Ascending aorta (tissue), 2 donors: ENCODE measurements at regions of chr22 and their contacts with region 1.

Region 1: DNA sequence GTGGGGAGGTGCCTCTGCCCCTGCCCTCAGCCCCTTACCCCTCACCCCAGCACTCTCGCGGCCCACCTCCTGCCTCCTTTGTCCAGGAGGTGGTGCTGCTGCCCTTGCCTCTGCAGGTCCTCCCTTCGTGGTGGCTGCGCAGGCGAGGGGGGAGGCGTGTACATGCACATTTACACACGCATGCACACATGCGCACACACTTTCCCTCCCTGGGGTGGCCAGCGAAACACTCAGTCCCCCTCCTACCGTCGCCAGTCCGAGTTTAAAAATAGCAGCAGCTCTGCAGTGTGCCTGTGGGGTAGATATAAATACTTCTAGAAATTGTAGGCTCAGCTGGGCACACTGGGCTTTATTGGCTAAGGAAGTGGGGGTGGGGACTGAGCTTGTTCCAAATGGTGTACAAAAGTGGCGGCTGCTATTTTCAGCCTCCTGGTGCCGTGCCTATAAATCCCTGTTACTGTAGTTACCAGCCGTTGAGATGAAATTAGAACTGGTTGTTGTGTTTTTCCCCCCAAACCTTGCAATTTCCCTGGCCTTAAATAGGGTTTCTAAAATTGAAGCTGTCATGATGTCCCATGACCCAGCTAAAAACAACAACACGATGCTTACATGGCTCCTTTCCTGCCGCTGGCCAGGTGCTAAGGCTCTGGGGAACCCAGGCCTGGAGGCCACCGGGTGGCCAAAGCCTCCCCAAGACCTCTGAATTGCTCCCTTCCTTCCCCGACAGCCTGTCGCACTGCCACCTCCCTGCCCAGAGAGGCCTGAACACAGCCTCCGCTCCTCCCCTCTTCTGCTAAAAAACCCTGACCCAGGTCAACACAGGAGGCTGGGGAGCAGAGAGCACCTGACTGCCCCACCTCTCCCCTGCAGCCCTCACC is 12.4 kb downstream of the PICK1 start:
- DNase-seq: peak; percentile 82 to 97
- H3K4me3 ChIP-seq: peak overlapping the region in 1 of 2 donors; percentile 40
- H3K27ac ChIP-seq: peak overlapping the region; percentile 94 to 97
- H3K4me1 ChIP-seq: peaks cover 32 to 48% of the 10 kb centered on the region in 2 donors
- H3K27me3 ChIP-seq: no peaks in the 10 kb centered on the region
- CTCF ChIP-seq: peak; percentile 81 to 88 (median 84)

Region 2: DNA sequence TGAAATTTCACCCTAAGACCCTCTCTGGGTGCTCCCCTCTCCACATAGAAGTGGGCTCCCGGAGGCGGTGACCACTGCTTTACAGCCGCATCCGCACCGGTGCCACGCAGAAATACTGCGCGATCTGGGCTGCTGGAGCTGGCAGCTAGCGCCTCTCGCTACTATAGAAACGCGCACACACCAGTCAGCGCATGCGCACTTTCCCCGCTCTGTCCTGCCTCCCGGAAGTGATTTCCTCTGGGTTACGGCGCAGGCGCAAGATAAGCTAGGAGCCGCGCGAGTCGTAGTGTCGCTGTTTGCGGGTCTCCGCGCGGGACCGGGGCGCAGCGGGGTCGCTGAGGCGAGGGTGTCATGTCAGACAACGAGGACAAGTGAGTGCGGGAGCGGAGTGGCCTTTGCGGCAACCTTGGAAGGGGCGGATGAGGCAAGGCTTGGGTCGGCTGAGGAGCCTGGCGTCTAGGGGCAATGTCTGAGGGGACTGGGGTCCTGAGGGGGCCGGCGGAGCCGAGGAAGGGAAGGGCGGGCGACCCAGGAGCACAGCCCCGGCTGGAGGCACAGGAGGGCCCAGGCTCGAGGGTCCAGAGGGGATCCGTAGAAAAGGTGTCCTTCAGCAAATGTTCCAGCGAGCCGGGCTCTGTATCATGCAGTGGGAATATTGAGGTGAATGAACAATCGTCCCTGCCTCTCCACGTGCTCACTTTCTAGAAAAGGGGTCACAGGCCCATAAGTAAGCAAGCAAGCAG is 116.0 kb before region 1 on chr22 and contains the starts of genes C22orf23 and POLR2F:
- intact Hi-C with region 1: no loop called
- DNase-seq: peak; percentile 64 to 97
- H3K4me3 ChIP-seq: peak within 1 kb of the TSS; percentile 73 to 95
- H3K27ac ChIP-seq: peak within 1 kb of the TSS; percentile 54 to 63
- H3K4me1 ChIP-seq: peaks cover 2 to 15% of the 10 kb centered on the region in 2 donors
- H3K27me3 ChIP-seq: no peaks in the 10 kb centered on the region
- CTCF ChIP-seq: no peak
- total RNA-seq, gene C22orf23: not detected
- total RNA-seq, gene POLR2F: 204 TPM

Region 3: DNA sequence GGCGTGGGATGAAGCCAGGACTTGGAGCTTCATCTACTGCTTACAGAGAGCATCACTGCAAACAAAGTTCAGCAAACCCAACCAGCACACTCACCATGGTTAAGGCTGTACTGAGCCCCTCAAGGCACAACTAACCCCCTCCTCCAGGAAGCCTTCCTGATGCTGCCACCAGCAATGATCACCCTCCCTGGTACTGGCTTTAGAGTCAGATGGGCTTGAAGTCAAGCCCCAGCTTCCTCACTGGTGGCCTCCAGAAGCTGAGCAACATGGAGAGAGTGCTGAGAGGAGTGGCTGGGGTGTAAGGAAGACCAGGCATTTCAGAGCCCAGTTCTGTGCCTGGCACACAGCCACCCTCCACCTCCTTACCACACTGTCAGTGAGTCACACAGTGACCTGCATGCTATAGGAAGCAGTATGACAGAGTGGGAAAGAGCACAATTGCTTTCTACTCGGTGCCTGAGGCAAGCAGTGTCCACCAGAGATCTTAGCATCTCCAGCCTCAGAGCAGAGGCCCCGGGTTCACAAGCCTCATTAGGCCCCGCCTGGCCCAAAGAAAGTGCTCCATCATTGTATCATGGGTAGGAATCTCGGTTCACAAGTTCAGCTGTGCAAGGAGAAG is 65.6 kb after region 1 on chr22:
- intact Hi-C with region 1: no loop called
- DNase-seq: no peak
- H3K4me3 ChIP-seq: no peak overlapping the region
- H3K27ac ChIP-seq: no peak overlapping the region
- H3K4me1 ChIP-seq: peaks cover 2 to 10% of the 10 kb centered on the region in 2 donors
- H3K27me3 ChIP-seq: no peaks in the 10 kb centered on the region
- CTCF ChIP-seq: no peak

Region 4: DNA sequence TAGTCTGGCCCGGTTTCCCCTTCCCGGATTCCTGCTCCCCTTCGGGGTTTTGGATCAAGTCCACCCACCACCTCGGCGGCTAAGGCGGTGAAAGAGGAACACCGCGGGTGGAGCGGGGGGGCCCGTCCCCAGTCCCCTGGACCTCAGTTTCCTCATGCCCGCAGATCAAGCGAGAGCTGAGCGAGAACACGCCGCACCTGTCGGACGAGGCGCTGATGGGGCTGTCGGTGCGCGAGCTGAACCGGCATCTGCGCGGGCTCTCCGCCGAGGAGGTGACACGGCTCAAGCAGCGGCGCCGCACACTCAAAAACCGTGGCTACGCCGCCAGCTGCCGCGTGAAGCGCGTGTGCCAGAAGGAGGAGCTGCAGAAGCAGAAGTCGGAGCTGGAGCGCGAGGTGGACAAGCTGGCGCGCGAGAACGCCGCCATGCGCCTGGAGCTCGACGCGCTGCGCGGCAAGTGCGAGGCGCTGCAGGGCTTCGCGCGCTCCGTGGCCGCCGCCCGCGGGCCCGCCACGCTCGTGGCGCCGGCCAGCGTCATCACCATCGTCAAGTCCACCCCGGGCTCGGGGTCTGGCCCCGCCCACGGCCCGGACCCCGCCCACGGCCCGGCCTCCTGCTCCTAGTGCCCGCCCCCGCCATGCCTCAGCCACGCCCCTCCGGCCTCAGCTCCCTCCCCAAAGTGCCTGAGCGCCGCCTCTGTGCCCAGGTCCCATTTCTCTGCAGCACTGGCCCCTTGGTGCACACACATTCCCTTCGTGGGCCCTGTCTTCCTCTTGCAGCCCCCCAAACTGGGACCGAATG is 144.8 kb after region 1 on chr22:
- intact Hi-C with region 1: loop called (anchors 5 kb)
- DNase-seq: no peak
- H3K4me3 ChIP-seq: peak overlapping the region in 1 of 2 donors; percentile 50
- H3K27ac ChIP-seq: peak overlapping the region; percentile 30 to 35
- H3K4me1 ChIP-seq: peaks cover 21 to 29% of the 10 kb centered on the region in 2 donors
- H3K27me3 ChIP-seq: no peaks in the 10 kb centered on the region
- CTCF ChIP-seq: peak in 1 of 3 experiments; percentile 24

Region 5: GRCh38 chr22:38255697-38256096 is 186.1 kb after region 1 on chr22:
- intact Hi-C with region 1: loop called (anchors 1 kb)
- DNase-seq: no peak
- H3K4me3 ChIP-seq: no peak overlapping the region
- H3K27ac ChIP-seq: peak overlapping the region; percentile 83 to 88
- H3K4me1 ChIP-seq: peaks cover 3 to 56% of the 10 kb centered on the region in 2 donors
- H3K27me3 ChIP-seq: no peaks in the 10 kb centered on the region
- CTCF ChIP-seq: no peak

Region 6: GRCh38 chr22:38272373-38273134 is 202.9 kb after region 1 on chr22 and contains the start of gene TMEM184B:
- intact Hi-C with region 1: loop called (anchors 2 kb)
- DNase-seq: peak in 1 of 2 donors; percentile 88
- H3K4me3 ChIP-seq: peak within 1 kb of the TSS; percentile 90 to 92
- H3K27ac ChIP-seq: peak within 1 kb of the TSS; percentile 96
- H3K4me1 ChIP-seq: peaks cover 8 to 34% of the 10 kb centered on the region in 2 donors
- H3K27me3 ChIP-seq: no peaks in the 10 kb centered on the region
- CTCF ChIP-seq: peak in 1 of 3 experiments; percentile 17
- total RNA-seq, gene TMEM184B: 118 TPM

Region 7: GRCh38 chr22:38317122-38317994 is 247.7 kb after region 1 on chr22 and contains the start of gene CSNK1E:
- intact Hi-C with region 1: loop called (anchors 2 kb)
- DNase-seq: peak; percentile 31 to 88
- H3K4me3 ChIP-seq: peak within 1 kb of the TSS; percentile 69 to 92
- H3K27ac ChIP-seq: peak within 1 kb of the TSS; percentile 97 to 100
- H3K4me1 ChIP-seq: peaks cover 10 to 37% of the 10 kb centered on the region in 2 donors
- H3K27me3 ChIP-seq: no peaks in the 10 kb centered on the region
- CTCF ChIP-seq: no peak
- total RNA-seq, gene CSNK1E: 185 TPM

Region 8: GRCh38 chr22:38353142-38353629 is 283.6 kb after region 1 on chr22:
- intact Hi-C with region 1: loop called (anchors 1 kb)
- DNase-seq: peak in 1 of 2 donors; percentile 85
- H3K4me3 ChIP-seq: no peak overlapping the region
- H3K27ac ChIP-seq: peak overlapping the region in 1 of 2 donors; percentile 19
- H3K4me1 ChIP-seq: peaks cover 0 to 6% of the 10 kb centered on the region in 2 donors
- H3K27me3 ChIP-seq: no peaks in the 10 kb centered on the region
- CTCF ChIP-seq: peak; percentile 99 to 100 (median 99)

Region 9: GRCh38 chr22:38569972-38570778 is 500.6 kb after region 1 on chr22 and contains the start of gene DMC1:
- intact Hi-C with region 1: loop called (anchors 5 kb)
- DNase-seq: peak; percentile 52 to 96
- H3K4me3 ChIP-seq: peak within 1 kb of the TSS; percentile 67 to 80
- H3K27ac ChIP-seq: peak within 1 kb of the TSS; percentile 91 to 95
- H3K4me1 ChIP-seq: peaks cover 4 to 35% of the 10 kb centered on the region in 2 donors
- H3K27me3 ChIP-seq: no peaks in the 10 kb centered on the region
- CTCF ChIP-seq: no peak
- total RNA-seq, gene DMC1: not detected